CD4-positive, alpha-beta T cell (primary cell): ENCODE measurements at regions of chr12 and their contacts with region 1.

Region 1: DNA sequence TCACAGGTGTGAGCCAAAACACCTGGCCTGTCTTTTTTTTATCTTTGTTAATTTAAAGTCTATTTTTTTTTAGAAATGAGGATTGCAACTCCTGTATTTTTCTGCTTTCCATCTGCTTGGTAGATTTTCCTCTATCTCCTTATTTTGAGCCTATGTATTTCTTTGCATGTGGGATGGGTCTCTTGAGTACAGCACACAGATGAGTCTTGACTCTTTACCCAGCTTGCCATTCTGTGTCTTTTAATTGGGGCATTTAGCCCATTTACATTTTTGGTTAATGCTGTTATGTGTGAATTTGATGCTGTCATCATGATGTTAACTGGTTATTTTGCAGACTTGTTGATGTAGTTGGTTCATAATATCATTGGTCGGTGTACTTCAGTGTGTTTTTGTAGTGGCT is 317.4 kb downstream of the IPO8 start:
- DNase-seq: no peak
- ATAC-seq: no peak
- H3K4me3 ChIP-seq: no peak overlapping the region
- H3K4me3 Mint-ChIP-seq: no peak overlapping the region
- H3K27ac ChIP-seq: no peak overlapping the region
- H3K27ac Mint-ChIP-seq: no peak overlapping the region
- H3K4me1 ChIP-seq: no peaks in the 10 kb centered on the region
- H3K4me1 Mint-ChIP-seq: no peaks in the 10 kb centered on the region
- H3K27me3 ChIP-seq: no peaks in the 10 kb centered on the region
- H3K27me3 Mint-ChIP-seq: no peaks in the 10 kb centered on the region
- CTCF ChIP-seq: no peak

Region 2: DNA sequence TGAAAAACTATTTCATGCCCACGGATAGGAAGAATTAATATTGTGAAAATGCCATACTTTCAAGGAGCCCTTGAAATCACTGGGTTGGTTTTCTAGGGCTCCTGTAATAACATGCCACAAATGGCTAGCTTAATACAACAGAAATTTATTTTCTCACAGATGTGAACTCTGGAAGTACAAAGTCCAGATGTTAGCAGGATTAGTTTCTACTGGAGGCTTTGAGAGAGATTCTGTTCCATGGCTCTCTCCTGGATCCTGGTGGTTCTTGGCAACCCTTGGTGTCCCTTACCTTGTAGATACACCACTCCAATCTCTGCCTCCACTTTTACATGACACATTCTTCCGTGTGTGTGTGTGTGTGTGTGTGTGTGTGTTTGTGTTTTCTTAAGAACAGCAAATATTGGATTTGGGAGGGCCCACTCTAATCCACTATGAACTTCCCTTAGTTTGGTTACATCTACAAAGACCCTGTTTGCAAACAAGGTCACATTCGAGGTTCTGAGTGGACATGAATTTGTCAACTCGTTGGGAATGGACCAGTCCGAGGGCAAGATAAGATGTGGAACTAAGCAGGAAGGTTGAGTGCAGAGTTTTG is 63.7 kb before region 1 on chr12:
- CTCF ChIA-PET with region 1: no interaction called
- POLR2A ChIA-PET with region 1: no interaction called
- intact Hi-C with region 1: loop called in 1 of 2 experiments (anchors 2 kb)
- DNase-seq: no peak
- ATAC-seq: no peak
- H3K4me3 ChIP-seq: no peak overlapping the region
- H3K4me3 Mint-ChIP-seq: no peak overlapping the region
- H3K27ac ChIP-seq: no peak overlapping the region
- H3K27ac Mint-ChIP-seq: no peak overlapping the region
- H3K4me1 ChIP-seq: no peaks in the 10 kb centered on the region
- H3K4me1 Mint-ChIP-seq: no peaks in the 10 kb centered on the region
- H3K27me3 ChIP-seq: no peaks in the 10 kb centered on the region
- H3K27me3 Mint-ChIP-seq: no peaks in the 10 kb centered on the region
- CTCF ChIP-seq: no peak